Activated T-helper 2 cell treated with anti-CD3 and anti-CD28 coated beads, Interferon-gamma antibody, Interleukin-2, Interleukin-4, amounts not matched to agents 10 μg/mL and 5 μg/mL and 100 μg/mL, durations not matched to agents 14 hours and 24 hours and 36 hours (primary cell): ENCODE measurements at regions of chr14 and their contacts with region 1.

Region 1: GRCh38 chr14:50321009-50321660 is 9.0 kb downstream of the DMAC2L start:
- DNase-seq: peak; percentile 67
- H3K4me3 Mint-ChIP-seq: no peak overlapping the region
- H3K27ac Mint-ChIP-seq: no peak overlapping the region
- H3K4me1 Mint-ChIP-seq: peaks cover 21% of the 10 kb centered on the region
- H3K27me3 Mint-ChIP-seq: no peaks in the 10 kb centered on the region

Region 2: GRCh38 chr14:50342221-50343078 is 21.3 kb after region 1 on chr14:
- intact Hi-C with region 1: loop called (anchors 1 kb)
- DNase-seq: peak; percentile 33
- H3K4me3 Mint-ChIP-seq: no peak overlapping the region
- H3K27ac Mint-ChIP-seq: peak overlapping the region; percentile 44
- H3K4me1 Mint-ChIP-seq: peaks cover 27% of the 10 kb centered on the region
- H3K27me3 Mint-ChIP-seq: peaks cover 11% of the 10 kb centered on the region

Region 3: DNA sequence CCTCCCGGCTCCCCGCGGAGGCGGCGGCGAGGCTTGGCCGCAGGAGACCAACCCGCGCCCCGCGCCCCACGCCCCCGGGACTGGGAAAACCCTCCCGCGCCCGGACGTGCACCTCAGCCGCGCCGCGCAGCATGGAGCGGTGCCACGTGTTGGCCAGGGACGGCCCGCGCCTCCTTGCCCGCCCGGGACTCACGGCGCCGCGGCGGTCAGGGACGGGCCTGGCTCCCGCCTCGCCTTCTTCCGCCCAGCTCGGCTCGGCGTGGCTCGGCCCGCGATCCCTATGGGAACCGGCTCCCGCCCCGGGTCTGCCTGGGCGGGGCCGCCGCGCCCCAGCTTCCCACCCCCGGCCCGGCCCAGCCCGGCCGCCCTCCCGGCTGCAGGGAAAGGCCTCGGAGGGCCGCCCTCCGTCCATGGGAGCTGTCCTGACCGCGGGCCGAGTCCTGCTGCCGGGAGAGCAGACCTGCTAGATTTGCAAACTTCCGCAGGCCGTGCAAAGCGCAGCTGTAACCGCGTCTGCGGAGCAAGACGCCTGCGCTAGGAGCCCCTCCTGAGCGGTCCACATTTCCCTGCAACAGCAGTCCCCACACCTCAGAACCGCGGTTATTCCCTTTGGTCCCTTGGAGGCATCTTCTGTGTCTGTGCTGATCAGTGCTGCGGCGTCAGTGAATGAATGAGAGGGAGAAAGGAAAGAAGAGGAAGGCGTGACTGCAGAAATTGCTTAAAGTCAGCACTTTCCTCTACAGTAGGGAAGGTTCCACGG is 75.7 kb after region 1 on chr14 and contains the start of gene CDKL1:
- intact Hi-C with region 1: loop called (anchors 2 kb)
- DNase-seq: peak; percentile 21
- H3K4me3 Mint-ChIP-seq: peak within 1 kb of the TSS; percentile 72
- H3K27ac Mint-ChIP-seq: no peak within 1 kb of the TSS
- H3K4me1 Mint-ChIP-seq: peaks cover 10% of the 10 kb centered on the region
- H3K27me3 Mint-ChIP-seq: peaks cover 37% of the 10 kb centered on the region
- total RNA-seq, gene CDKL1: 3.6 and 5.0 TPM in 2 replicates

Region 4: DNA sequence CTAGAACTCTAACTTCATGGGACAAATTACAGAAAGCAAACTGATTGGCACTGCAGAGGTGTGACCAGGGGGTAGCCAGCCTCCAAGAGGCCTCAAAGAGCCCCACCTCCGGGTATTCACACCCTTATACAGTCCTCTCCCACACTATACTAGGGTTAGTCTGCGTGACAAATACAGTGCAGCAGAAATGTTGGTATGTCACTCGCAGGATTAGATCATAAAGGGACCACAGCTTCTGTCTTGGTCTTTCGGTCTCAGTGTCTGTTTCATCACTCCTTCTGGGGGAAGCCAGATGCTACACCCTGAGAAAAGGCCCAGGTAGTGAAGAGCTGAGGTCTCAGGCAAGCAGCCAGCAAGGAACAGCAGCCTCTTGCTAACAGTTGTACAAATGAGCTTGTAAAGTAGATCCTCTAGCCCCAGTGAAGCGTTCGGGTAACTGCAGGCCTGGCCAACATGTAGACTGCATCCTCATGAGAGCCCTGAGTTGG is 415.8 kb after region 1 on chr14:
- intact Hi-C with region 1: loop called (anchors 2 kb)
- DNase-seq: peak; percentile 24
- H3K4me3 Mint-ChIP-seq: no peak overlapping the region
- H3K27ac Mint-ChIP-seq: peak overlapping the region; percentile 28
- H3K4me1 Mint-ChIP-seq: peaks cover 28% of the 10 kb centered on the region
- H3K27me3 Mint-ChIP-seq: no peaks in the 10 kb centered on the region